ENCODE measurements at regions of chr1 and their contacts with region 1.

Region 1: DNA sequence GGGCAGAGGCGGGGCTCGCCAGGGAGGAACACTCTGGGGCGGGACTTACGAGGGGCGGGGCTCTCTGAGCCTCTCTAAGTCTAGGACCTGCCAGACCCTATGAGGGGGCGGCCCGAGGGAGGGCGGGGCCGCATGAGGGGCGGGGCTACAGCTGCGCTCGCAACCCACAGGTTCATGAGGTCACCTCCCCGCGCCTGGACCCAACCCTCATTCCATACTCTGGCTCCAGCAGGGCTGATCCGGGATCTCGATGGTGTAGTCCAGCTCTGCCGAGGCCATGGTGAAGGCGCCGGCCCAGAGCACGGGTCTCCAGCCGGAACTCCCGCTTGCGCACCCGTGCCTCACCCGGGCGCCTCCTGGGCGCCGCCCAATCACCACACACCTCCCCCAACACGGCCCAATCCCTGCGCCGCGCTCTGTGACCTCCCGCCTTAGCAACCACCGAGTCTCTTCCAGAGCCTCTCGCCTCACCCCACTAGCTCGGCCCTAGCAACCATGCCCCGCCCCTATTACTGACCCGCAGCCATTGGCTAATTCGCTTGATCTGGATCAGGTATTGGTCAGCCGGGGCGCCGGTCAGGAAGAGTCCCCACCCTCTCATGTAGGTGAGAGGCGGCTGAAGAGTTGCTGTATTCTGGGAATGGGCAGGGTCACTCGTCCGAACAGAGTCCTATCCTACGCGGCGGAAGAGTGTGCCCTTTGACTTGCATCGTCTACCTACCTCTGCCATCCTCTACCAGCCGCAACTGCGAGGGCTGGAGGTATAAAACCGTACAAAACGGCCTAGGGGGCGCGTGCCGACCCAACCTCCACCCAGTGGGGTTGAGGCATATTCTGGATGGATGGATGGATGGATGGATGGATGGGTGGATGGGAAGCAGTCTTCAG is at the starts of genes ARMH1 and TMEM53:
- DNase-seq: peak; percentile 99
- H3K4me3 ChIP-seq: peak within 1 kb of the TSS; percentile 63 to 92 (median 81)
- H3K27ac ChIP-seq: peak within 1 kb of the TSS; percentile 59 to 84
- H3K4me1 ChIP-seq: peaks cover 22 to 76% (median 53%) of the 10 kb centered on the region in 4 experiments
- H3K27me3 ChIP-seq: no peaks in the 10 kb centered on the region

Region 2: DNA sequence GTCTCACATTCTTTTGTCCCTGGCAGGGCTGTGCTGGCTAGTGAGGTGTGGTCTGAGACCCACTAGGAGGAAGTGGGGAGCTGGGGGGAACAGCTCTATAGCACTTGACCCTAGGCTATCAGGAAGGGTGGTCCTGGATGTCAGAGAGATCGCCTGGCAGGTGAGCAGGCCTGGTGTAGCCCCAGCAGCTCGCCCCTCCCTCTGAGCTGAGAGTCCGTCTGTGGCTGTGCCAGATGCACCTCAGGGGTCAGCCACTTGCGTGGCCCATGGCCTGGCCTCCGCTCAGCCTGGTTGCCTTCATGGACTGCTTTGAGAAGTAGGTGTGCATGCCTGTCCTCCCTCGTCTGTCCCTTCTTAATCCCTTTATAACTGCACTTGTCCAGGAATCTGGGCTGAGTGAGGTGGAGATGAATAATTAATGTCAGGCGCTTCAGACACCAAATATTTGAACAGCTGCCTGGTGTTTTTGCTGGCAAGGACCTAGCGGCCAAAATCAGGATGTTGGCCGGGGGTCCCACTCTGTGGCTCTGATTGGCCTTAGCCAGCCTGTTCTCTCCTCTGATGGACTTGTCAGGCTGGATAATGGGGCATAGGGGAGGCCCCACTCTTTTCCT is 30.5 kb before region 1 on chr1:
- CTCF ChIA-PET with region 1: no interaction called
- POLR2A ChIA-PET with region 1: no interaction called
- DNase-seq: no peak
- H3K4me3 ChIP-seq: no peak overlapping the region
- H3K27ac ChIP-seq: no peak overlapping the region
- H3K4me1 ChIP-seq: no peaks in the 10 kb centered on the region
- H3K27me3 ChIP-seq: no peaks in the 10 kb centered on the region

Region 3: DNA sequence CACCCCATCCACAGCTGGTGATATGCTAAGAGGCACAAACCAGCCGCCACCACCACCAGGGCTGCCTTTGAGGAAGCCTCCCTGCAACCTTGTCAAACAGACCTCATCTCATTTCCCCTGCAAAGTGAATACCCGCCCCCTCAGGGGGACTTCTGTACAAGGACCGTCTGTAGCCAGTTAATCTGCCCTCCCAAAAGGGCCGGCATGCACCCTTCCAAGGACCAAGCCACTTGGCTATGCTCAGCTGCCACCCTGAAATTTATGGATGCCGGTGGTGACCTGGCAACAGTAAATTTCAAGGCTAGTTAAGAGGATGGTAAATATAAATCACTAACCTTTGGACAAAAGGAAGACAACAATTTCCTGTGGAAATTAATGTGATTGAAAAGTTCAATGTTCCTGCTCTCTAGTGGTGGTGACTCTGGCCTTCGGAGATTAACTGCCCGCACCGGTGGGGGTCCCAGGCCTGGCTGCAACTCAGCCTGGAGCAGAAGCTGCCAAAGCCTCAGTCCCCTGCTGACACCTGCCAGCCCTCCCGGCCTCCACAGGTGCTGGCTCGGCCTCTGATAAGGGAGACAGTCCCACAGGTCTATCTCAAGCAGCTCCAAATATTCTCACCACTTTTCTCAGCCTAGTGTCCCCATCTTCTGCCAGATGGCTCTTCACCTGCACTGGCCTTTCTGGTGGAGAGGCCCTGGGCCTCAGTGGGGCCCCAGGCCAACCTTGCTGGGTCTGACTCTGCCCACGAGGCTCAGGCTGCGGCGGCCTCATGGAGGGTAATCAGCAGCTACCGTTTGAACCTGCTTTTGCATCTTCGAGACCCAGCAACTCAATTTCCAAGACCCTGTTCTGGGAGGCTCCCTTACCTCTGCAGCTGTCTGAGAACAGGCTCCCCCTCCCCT is 12.3 kb before region 1 on chr1:
- CTCF ChIA-PET with region 1: interaction called, 10 read pairs
- POLR2A ChIA-PET with region 1: no interaction called
- DNase-seq: peak in 2 of 3 donors; percentile 69 to 76
- H3K4me3 ChIP-seq: no peak overlapping the region
- H3K27ac ChIP-seq: no peak overlapping the region
- H3K4me1 ChIP-seq: peaks cover 0 to 25% (median 19%) of the 10 kb centered on the region in 4 experiments
- H3K27me3 ChIP-seq: no peaks in the 10 kb centered on the region

Region 4: GRCh38 chr1:44835738-44836675 is 161.7 kb after region 1 on chr1:
- CTCF ChIA-PET with region 1: no interaction called
- POLR2A ChIA-PET with region 1: no interaction called
- DNase-seq: peak; percentile 86 to 94 (median 89)
- H3K4me3 ChIP-seq: peak overlapping the region in 1 of 7 experiments; percentile 51
- H3K27ac ChIP-seq: no peak overlapping the region
- H3K4me1 ChIP-seq: peaks cover 0 to 54% (median 51%) of the 10 kb centered on the region in 4 experiments
- H3K27me3 ChIP-seq: no peaks in the 10 kb centered on the region

Region 5: GRCh38 chr1:45116340-45116739 is 442.0 kb after region 1 on chr1:
- CTCF ChIA-PET with region 1: no interaction called
- POLR2A ChIA-PET with region 1: no interaction called
- DNase-seq: peak in 2 of 3 donors; percentile 27 to 35
- H3K4me3 ChIP-seq: no peak overlapping the region
- H3K27ac ChIP-seq: no peak overlapping the region
- H3K4me1 ChIP-seq: peaks cover 0 to 9% (median 5%) of the 10 kb centered on the region in 4 experiments
- H3K27me3 ChIP-seq: no peaks in the 10 kb centered on the region